HEK293 (cell line): ENCODE measurements at regions of chr17 and their contacts with region 1.

Region 1: DNA sequence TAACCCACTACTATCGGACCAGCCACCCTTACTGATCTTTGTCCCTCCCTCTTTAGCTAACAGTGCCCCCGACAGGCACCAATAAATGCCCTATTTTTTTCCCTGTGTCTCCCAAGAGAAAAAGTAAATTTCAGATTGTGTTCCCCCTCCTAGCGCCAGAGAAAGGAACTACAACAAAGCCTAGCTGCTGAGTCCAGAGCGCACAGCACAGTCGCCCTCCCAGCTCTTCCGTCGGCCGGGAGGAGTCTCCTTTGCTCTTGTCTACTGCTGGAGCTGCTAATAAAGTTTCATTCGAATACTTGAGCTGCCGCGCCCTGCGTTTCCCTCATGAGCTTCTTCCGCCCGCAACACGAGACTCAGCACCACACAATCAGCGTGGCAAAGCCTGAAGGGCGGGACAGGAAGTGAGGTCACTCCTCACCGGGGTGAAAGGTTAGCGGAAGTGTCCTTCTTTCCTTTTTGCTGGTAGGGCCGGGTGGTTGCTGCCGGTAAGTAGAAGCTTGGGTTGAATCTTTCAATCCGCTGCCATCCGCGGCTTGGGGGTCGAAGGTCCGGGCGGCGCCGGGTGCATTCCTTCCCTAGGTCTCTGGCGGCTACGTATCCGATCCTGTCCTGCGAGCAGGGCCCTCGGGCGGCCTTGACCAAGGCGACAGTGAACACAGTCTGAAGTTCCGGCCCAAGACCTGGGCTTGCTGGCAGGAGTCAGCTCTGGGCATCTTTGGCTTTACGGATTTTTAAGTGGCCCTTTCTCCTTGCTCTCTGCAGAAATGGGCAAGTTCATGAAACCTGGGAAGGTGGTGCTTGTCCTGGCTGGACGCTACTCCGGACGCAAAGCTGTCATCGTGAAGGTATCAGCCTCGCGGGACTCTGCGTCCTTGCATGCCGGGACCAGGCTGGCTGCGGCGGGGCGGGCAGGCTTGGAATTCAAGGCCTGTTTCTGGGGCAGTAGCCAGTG is at the start of gene RPL27:
- H3K4me3 ChIP-seq: peak within 1 kb of the TSS; percentile 64
- H3K27ac ChIP-seq: peak within 1 kb of the TSS; percentile 99
- H3K4me1 ChIP-seq: peaks cover 12% of the 10 kb centered on the region
- CTCF ChIP-seq: peak; percentile 94

Region 2: GRCh38 chr17:42819944-42820535 is 178.2 kb before region 1 on chr17:
- CTCF ChIA-PET with region 1: interaction called, 6 read pairs
- POLR2A ChIA-PET with region 1: interaction called, 18 read pairs
- H3K4me3 ChIP-seq: no peak overlapping the region
- H3K27ac ChIP-seq: no peak overlapping the region
- H3K4me1 ChIP-seq: peaks cover 4% of the 10 kb centered on the region; the same call in 1 of the 2 replicates
- CTCF ChIP-seq: no peak

Region 3: DNA sequence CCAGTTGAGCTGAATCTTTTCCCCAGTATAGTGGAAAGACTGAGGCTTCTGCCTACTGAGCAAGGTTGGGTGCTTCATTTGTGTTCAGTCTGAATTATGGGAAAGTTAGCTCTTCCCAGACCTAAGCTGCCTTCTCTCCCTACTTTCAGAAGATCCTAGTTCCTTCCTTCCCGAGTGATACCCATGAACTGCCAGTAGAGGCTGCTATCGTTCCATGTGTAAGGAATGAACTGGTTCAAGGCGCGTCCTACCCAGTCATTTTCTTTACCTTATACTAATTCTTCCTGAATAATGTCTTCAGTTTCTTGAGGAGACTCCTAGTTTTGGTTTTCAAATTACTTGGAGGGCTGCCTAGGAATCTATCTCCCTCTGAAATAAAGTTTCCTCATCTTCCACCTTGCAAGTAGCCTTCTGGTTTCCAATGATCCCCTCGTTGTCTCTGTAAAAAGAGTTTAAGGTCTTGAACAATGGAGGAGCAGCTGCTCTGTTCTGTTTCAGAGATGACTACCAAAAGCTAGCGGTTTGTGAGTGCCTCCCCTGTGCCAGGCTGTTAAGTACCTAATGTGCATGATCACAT is 154.8 kb before region 1 on chr17:
- CTCF ChIA-PET with region 1: interaction called, 14 read pairs
- POLR2A ChIA-PET with region 1: interaction called, 25 read pairs
- H3K4me3 ChIP-seq: no peak overlapping the region
- H3K27ac ChIP-seq: no peak overlapping the region
- H3K4me1 ChIP-seq: no peaks in the 10 kb centered on the region
- CTCF ChIP-seq: peak; percentile 89

Region 4: DNA sequence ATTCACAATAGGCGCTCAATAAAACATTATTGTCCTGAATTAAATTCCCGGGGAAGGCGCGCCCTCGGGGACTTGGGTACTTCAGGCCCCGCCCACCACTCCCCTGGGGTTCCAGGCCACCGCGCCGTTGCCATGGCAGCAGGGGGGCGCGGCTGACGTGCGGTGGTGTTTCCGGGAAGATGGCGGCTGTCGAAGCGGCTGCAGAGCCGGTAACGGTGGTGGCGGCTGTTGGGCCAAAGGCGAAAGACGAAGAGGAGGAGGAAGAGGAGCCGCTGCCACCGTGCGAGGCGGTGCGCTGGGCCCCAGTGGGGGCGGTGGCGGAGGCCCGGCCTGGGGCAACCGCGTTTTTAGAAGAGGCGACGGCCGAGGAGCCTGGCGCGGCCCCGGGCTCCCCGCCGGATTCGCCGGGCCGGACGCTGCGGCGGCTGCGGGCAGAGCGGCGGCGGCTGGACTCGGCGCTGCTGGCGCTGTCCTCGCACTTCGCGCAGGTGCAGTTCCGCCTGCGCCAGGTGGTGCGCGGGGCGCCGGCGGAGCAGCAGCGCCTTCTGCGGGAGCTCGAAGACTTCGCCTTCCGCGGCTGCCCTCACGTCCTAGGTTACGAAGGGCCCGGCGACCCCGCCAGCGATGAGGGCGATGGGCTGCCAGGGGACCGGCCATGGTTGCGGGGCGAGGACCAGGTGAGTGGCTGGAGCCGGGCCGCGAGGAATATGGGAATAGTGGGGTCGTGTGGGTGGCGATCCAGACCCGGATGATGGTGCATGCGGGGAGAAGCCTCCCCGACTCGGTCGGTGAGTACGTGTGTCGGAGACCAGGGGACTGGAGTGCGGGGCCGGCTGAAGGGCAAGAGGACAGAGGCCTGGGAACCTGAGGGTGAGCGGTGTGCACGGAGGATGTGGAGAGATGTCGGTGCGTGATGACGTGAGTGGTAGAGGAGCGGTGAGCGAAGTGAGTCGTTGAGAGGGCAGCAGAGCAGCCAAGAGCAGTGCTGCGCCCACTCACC is 17.6 kb before region 1 on chr17 and contains the start of gene RUNDC1:
- CTCF ChIA-PET with region 1: interaction called, 17 read pairs
- POLR2A ChIA-PET with region 1: interaction called, 26 read pairs
- H3K4me3 ChIP-seq: peak within 1 kb of the TSS; percentile 85
- H3K27ac ChIP-seq: peak within 1 kb of the TSS; percentile 78
- H3K4me1 ChIP-seq: peaks cover 10% of the 10 kb centered on the region
- CTCF ChIP-seq: peak; percentile 81

Region 5: GRCh38 chr17:43024407-43025289 is 26.4 kb after region 1 on chr17 and contains the start of gene RND2:
- CTCF ChIA-PET with region 1: interaction called, 4 read pairs
- POLR2A ChIA-PET with region 1: interaction called, 36 read pairs
- H3K4me3 ChIP-seq: peak within 1 kb of the TSS; percentile 52
- H3K27ac ChIP-seq: peak within 1 kb of the TSS; percentile 62
- H3K4me1 ChIP-seq: peaks cover 2% of the 10 kb centered on the region
- CTCF ChIP-seq: peak; percentile 97

Region 6: DNA sequence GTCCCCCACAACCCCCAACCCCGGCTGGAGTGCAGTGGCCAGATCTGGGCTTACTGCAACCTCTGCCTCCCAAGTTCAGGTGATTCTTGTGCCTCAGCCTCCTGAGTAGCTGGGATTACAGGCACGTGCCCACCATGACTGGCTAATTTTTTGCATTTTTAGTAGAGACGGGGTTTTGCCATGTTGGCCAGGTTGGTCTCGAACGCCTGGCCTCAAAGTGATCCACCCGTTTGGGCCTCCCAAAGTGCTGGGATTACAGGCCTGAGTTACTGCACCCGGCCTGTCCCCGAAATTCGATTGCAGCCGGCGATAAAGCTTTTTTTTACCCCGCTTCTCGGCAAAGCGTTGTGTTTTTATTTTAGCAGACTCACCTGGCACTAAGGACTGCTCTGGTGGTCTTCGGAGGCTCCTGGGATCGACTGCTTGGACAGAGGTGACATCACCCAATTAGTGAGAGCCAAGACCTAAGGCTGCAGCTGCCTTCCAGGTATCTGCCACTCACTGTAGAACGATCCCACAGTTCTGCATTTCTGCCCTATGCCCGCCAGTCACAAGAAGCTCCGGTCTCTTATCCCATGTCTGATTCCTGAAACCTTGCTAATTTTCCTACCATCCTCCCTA is 318.4 kb after region 1 on chr17:
- CTCF ChIA-PET with region 1: interaction called, 4 read pairs
- POLR2A ChIA-PET with region 1: interaction called, 12 read pairs
- H3K4me3 ChIP-seq: no peak overlapping the region
- H3K27ac ChIP-seq: no peak overlapping the region
- H3K4me1 ChIP-seq: no peaks in the 10 kb centered on the region
- CTCF ChIP-seq: no peak

Region 7: GRCh38 chr17:43388359-43389045 is 390.2 kb after region 1 on chr17:
- CTCF ChIA-PET with region 1: no interaction called
- POLR2A ChIA-PET with region 1: interaction called, 10 read pairs
- H3K4me3 ChIP-seq: peak overlapping the region; percentile 61
- H3K27ac ChIP-seq: peak overlapping the region; percentile 86
- H3K4me1 ChIP-seq: no peaks in the 10 kb centered on the region
- CTCF ChIP-seq: no peak

Region 8: DNA sequence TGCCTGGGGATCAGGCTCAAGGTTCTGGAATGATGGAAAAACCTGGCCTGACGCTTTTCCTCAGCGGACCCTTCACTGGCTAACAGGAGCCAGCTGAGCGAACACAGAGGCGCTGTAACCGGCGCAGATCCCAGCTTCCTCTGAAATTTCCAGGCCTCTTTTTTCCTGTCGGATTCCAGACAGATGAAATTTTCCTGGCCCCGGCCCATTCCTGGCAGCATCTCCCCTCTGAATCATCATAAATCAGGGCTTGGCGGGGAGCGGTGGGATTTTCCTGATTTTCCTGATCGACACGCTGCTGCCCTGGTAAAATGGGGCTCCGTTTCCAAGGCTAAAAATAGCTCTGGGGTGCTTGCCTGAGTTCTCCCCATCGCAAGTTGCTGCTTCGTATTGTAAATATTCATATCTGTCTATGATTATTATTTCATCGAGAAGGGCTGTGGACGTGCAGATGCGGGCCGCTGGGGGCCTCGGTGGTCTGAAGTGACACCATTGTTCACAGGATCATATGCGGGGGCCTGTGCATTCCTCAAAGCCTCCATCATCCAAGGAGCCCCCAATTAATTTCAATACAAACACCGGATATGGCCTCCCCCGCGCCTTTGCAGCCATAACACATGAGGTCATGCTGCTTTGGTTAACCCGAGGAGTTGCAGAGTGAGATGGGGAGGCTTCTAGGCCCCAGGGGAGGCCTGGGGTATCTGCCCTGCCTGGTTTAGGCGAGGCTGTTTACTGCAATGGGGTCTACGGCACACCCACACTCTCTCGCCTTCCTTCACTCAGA is 593.7 kb after region 1 on chr17:
- CTCF ChIA-PET with region 1: no interaction called
- POLR2A ChIA-PET with region 1: no interaction called
- H3K4me3 ChIP-seq: no peak overlapping the region
- H3K27ac ChIP-seq: peak overlapping the region; percentile 22; the same call in 1 of the 2 replicates
- H3K4me1 ChIP-seq: peaks cover 10% of the 10 kb centered on the region
- CTCF ChIP-seq: no peak